HepG2 (cell line): ENCODE measurements at regions of chr7 and their contacts with region 1.

Region 1: GRCh38 chr7:17205910-17206905 is 92.2 kb upstream of the AHR start:
- DNase-seq: peak; percentile 98
- ATAC-seq: peak; percentile 97
- H3K4me3 ChIP-seq: no peak overlapping the region; a peak in 1 of 6 replicates
- H3K27ac ChIP-seq: peak overlapping the region; percentile 76
- H3K4me1 ChIP-seq: peaks cover 38% of the 10 kb centered on the region
- H3K27me3 ChIP-seq: no peaks in the 10 kb centered on the region
- CTCF ChIP-seq: no peak
- EP300 ChIP-seq: peak; percentile 92 to 93; a peak in 3 of 4 replicates
- POLR2A ChIP-seq: no peak
- RAD21 ChIP-seq: no peak

Region 2: DNA sequence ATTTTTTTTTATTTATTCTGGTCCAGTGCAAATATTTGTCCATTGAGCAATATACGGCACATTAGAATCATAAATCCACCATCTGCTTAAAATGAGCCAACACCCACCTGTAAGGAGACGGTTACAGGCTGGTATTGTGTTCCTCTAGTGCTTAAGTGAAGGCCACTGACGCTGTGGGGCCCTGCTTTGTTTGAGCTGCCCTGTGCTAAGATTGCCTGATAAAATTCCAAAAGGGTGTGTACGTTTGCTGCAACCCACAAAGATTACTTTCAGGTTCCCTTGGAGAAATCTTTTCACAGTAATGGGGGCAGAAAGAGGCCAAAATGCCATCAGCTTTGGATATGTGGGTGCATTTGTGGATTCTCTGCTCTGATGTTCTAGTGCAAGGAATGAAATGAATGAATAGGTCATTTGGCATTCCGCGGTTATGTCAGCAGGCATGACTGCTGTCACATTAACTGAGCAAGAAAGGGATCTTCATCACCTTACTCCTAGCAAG is 358.8 kb before region 1 on chr7:
- CTCF ChIA-PET with region 1: no interaction called
- POLR2A ChIA-PET with region 1: no interaction called
- in situ Hi-C with region 1: no loop called
- intact Hi-C with region 1: no loop called
- DNase-seq: peak; percentile 50
- ATAC-seq: peak; percentile 86
- H3K4me3 ChIP-seq: no peak overlapping the region
- H3K27ac ChIP-seq: no peak overlapping the region
- H3K4me1 ChIP-seq: peaks cover 10% of the 10 kb centered on the region
- H3K27me3 ChIP-seq: peaks cover 0 to 9% of the 10 kb centered on the region in 2 experiments; a peak in 1 of 5 replicates
- CTCF ChIP-seq: no peak
- EP300 ChIP-seq: no peak
- POLR2A ChIP-seq: no peak
- RAD21 ChIP-seq: no peak

Region 3: DNA sequence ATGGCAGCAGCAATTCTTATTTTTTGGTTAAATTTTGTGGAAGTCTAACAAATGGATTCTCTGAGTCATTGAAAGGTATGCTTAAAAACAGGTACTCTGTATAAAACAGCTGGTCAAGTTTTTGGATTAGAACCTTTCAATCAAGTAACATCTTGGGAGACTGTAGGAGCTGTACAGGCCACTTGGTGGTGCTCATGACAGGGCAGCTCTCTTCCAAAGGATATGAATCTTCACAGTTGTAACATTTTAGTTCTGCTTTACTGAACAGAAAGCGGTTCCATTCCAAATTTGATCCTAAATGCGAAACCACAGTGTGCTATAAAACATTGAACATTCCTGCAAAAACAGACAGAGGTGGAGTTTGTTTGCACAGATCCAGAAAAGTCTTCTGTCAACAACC is 279.9 kb before region 1 on chr7:
- CTCF ChIA-PET with region 1: no interaction called
- POLR2A ChIA-PET with region 1: no interaction called
- in situ Hi-C with region 1: no loop called
- intact Hi-C with region 1: loop called (anchors 2 kb)
- DNase-seq: peak; percentile 28
- ATAC-seq: peak; percentile 86
- H3K4me3 ChIP-seq: no peak overlapping the region
- H3K27ac ChIP-seq: no peak overlapping the region
- H3K4me1 ChIP-seq: peaks cover 28% of the 10 kb centered on the region
- H3K27me3 ChIP-seq: no peaks in the 10 kb centered on the region; a peak in 1 of 5 replicates
- CTCF ChIP-seq: peak; percentile 57
- EP300 ChIP-seq: no peak
- POLR2A ChIP-seq: no peak
- RAD21 ChIP-seq: peak; percentile 35; the same call in 1 of the 2 replicates

Region 4: DNA sequence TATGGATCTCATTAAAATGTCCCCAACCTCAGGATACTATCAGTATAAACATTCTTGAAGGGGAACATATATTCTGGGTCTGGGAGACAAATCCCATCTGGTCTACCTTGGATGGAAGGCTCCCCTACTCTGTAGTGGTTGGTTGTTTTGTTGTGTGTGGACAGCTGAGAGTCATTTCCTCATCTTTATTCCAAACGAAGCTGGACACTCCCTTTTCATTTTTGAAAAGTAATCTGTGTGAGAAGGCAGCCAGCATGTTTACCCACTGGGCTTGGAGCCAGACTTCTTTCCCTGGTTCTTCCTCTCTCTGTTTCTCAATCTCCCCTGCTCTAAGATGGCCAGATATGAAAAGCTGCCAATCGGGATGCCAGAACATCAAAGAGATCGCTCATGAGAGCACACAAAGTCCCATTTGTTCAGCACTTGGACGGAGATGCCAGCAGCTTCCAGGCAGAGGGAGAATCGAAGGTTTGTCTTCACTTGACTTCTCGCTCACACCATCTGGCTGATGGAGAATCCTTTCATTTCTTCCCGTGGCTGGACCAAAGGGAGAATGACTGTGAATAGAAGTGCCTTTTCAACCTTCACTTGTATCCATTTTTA is 216.3 kb before region 1 on chr7:
- CTCF ChIA-PET with region 1: no interaction called
- POLR2A ChIA-PET with region 1: interaction called, 3 read pairs
- in situ Hi-C with region 1: no loop called
- intact Hi-C with region 1: loop called (anchors 2 kb)
- DNase-seq: peak; percentile 100
- ATAC-seq: peak; percentile 96
- H3K4me3 ChIP-seq: peak overlapping the region; percentile 15 to 51 (median 36); a peak in 5 of 6 replicates
- H3K27ac ChIP-seq: peak overlapping the region; percentile 76
- H3K4me1 ChIP-seq: peaks cover 81% of the 10 kb centered on the region
- H3K27me3 ChIP-seq: no peaks in the 10 kb centered on the region
- CTCF ChIP-seq: no peak
- EP300 ChIP-seq: peak; percentile 49 to 98; a peak in 2 of 4 replicates
- POLR2A ChIP-seq: peak in 1 of 2 experiments; percentile 41; a peak in 1 of 4 replicates
- RAD21 ChIP-seq: no peak; the same call in none of the 2 replicates

Region 5: DNA sequence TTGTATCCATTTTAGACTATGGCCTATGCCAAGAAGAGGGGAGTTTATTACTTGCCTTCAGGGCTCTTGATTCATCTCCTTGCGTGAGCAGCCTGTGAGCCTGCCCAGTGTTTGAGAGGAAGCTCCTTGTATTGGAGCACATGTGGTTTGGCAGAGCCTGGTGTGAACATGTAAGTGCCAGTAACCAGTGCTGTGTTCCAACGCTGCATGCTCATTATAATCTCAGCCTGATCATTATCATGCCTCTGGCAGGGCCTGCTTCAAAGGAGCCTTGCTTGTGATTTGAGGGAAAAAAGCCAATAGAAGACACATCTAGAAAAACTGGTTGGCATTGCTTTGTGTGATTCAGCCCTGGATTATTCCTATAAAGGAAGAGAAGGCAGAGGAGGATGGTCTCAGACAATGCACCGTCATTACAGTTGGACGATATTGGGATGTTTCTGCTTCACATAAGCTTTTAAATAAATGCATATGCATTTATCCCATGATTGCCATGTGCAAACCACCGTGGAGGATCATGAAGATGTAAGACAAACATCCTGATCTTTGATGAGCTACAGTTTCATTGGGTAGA is 111.1 kb before region 1 on chr7:
- CTCF ChIA-PET with region 1: no interaction called
- POLR2A ChIA-PET with region 1: no interaction called
- in situ Hi-C with region 1: no loop called
- intact Hi-C with region 1: loop called (anchors 1 kb)
- DNase-seq: no peak
- ATAC-seq: no peak
- H3K4me3 ChIP-seq: no peak overlapping the region
- H3K27ac ChIP-seq: no peak overlapping the region
- H3K4me1 ChIP-seq: peaks cover 23% of the 10 kb centered on the region
- H3K27me3 ChIP-seq: no peaks in the 10 kb centered on the region
- CTCF ChIP-seq: no peak
- EP300 ChIP-seq: no peak
- POLR2A ChIP-seq: no peak
- RAD21 ChIP-seq: no peak

Region 6: GRCh38 chr7:17142831-17143541 is 63.2 kb before region 1 on chr7:
- CTCF ChIA-PET with region 1: no interaction called
- POLR2A ChIA-PET with region 1: no interaction called
- in situ Hi-C with region 1: no loop called
- intact Hi-C with region 1: loop called (anchors 2 kb)
- DNase-seq: peak; percentile 92
- ATAC-seq: peak; percentile 97
- H3K4me3 ChIP-seq: peak overlapping the region in 2 of 3 experiments; percentile 38 to 42; a peak in 3 of 6 replicates
- H3K27ac ChIP-seq: peak overlapping the region; percentile 80
- H3K4me1 ChIP-seq: peaks cover 66% of the 10 kb centered on the region
- H3K27me3 ChIP-seq: no peaks in the 10 kb centered on the region
- CTCF ChIP-seq: no peak
- EP300 ChIP-seq: peak in 1 of 2 experiments; percentile 84; a peak in 2 of 4 replicates
- POLR2A ChIP-seq: no peak
- RAD21 ChIP-seq: no peak

Region 7: DNA sequence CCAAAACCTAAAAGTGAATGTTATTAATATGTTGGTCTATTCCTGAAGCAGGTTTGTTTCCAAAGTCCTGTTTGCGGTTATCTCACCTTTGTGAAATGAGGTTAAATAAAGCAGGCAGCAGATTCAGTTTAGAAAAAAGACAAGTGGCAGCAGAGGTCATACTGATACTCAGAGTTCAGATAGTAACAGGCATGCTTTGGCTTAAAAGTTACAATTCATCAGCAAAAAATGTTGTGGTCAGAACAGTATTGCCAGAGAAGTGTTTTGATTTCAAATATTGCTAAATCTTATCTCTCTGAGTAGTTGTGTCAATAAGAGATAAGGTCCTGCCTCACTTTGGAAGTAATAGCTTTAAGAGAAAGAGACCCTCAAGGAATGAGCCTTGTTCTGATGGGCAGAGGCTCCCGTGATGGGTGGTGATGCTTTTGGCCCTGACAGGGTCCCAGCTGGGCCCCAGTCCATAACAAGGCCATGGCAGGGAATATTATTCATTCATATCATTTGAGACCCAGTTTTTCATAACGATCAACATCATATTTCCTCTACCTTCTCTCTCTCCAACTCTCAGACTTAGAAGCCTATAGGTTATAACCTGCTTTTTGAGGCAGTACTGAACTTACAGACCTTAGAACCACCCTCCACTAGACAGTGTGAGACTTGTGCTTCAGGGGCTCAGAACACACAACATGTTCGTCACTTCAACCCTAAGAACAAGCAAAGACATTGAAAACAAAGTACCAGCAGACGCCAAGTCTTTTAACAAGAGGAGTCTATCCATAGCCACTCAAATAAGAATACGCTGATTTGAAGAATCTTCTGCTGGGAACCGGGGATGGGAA is 33.7 kb after region 1 on chr7:
- CTCF ChIA-PET with region 1: no interaction called
- POLR2A ChIA-PET with region 1: interaction called, 4 read pairs
- in situ Hi-C with region 1: no loop called
- intact Hi-C with region 1: loop called (anchors 1 kb)
- DNase-seq: peak; percentile 91
- ATAC-seq: peak; percentile 95
- H3K4me3 ChIP-seq: no peak overlapping the region
- H3K27ac ChIP-seq: no peak overlapping the region
- H3K4me1 ChIP-seq: peaks cover 18% of the 10 kb centered on the region
- H3K27me3 ChIP-seq: peaks cover 0 to 8% of the 10 kb centered on the region in 2 experiments; a peak in 3 of 5 replicates
- CTCF ChIP-seq: no peak
- EP300 ChIP-seq: peak in 1 of 2 experiments; percentile 89; a peak in 2 of 4 replicates
- POLR2A ChIP-seq: no peak
- RAD21 ChIP-seq: no peak

Region 8: GRCh38 chr7:17495655-17496394 is 289.6 kb after region 1 on chr7:
- CTCF ChIA-PET with region 1: no interaction called
- POLR2A ChIA-PET with region 1: no interaction called
- in situ Hi-C with region 1: no loop called
- intact Hi-C with region 1: no loop called
- DNase-seq: no peak
- ATAC-seq: no peak
- H3K4me3 ChIP-seq: no peak overlapping the region
- H3K27ac ChIP-seq: no peak overlapping the region
- H3K4me1 ChIP-seq: peaks cover 24% of the 10 kb centered on the region
- H3K27me3 ChIP-seq: no peaks in the 10 kb centered on the region; a peak in 1 of 5 replicates
- CTCF ChIP-seq: no peak
- EP300 ChIP-seq: no peak
- POLR2A ChIP-seq: no peak
- RAD21 ChIP-seq: no peak